ENCODE measurements at regions of chr2 and their contacts with region 1.

Region 1: DNA sequence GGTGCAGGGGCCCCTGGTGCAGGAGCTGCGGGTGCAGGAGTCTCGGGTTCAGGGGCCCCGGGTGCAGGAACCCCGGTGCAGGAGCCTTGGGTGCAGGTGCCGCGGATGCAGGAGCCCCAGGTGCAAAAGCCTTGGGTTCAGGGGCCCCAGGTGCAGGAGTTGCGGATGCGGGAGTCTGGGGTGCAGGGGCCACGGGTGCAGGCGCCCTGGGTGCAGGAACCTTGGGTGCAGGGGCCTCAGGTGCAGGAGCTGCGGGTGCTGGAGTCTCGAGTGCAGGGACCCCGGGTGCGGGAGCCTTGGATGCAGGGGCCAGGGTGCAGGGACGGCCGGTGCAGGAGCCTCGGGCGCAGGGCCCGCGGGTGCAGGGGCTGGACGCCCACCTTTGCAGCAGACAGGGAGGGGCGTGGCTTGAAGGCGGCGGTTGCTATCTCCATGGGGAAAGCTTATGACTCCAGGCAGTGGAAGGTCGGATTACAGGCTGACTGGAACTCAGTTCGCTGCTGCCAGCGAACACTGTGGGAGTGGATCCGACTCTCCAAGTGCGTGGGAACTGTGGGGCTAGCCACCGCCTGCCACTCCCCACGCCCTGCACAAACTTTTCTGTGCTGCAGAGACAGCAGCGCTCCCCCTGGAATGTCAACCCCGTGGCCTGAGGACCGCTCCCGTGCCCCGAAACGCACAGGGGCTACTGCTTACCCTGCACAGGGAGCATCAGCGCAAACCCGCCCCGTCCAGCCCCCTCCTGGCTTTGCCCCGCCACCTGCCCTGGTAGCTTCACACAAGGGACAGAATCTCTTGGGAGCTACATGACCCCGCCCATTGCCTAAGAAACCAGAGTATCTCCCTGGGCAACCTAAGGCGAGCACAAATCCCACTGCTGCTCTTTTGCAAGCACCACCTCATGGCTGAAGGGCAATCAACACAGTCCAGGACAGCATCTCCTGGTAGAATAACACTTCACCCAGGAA is 40.3 kb downstream of the COPS9 start:
- DNase-seq: no peak
- ATAC-seq: no peak
- H3K4me3 ChIP-seq: no peak overlapping the region
- H3K27ac ChIP-seq: no peak overlapping the region
- H3K4me1 ChIP-seq: no peaks in the 10 kb centered on the region
- H3K27me3 ChIP-seq: peaks cover 22% of the 10 kb centered on the region
- CTCF ChIP-seq: no peak
- POLR2A ChIP-seq: no peak
- RAD21 ChIP-seq: no peak

Region 2: DNA sequence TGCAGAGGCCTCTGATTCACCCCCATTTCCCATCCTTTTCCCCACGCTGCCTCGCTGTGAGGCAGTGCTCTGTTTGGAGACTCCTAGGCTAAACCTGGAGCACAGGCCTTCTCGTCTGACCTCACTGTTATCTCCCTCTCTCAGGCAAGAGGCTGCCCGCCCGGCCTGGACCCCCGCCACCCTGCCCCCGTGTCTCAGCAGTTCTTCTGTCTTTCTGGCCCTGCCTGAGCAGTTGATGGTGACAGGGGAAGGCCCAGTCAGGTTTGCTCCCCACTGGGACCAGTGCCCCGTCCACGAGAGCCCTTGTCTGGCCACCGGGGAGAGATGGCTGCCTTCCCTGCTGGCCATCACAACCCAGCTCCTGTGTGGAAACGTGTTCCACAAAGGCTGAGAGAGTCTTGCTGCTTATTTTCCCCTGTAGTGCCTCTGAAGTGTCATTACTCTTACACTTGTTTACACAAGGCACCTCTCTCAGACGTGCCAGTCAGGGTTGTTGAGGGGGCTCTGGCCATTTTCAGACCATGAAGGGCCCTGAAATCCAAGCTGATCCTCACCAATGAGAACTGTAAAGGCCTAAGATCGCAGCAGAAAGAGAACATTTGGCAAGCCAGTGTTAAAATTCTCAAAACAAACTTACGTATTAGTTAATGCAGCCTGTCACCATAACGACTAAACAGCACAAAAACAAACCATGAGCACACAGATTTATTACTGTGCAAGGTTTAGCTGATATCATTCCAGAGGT is 281.6 kb before region 1 on chr2:
- CTCF ChIA-PET with region 1: no interaction called
- POLR2A ChIA-PET with region 1: no interaction called
- dilution Hi-C with region 1: no loop called
- in situ Hi-C with region 1: no loop called
- intact Hi-C with region 1: no loop called
- DNase-seq: no peak
- ATAC-seq: no peak
- H3K4me3 ChIP-seq: no peak overlapping the region
- H3K27ac ChIP-seq: no peak overlapping the region
- H3K4me1 ChIP-seq: no peaks in the 10 kb centered on the region
- H3K27me3 ChIP-seq: no peaks in the 10 kb centered on the region
- CTCF ChIP-seq: no peak
- POLR2A ChIP-seq: no peak
- RAD21 ChIP-seq: no peak

Region 3: GRCh38 chr2:240069853-240070252 is 26.0 kb before region 1 on chr2:
- CTCF ChIA-PET with region 1: no interaction called
- POLR2A ChIA-PET with region 1: interaction called, 16 read pairs
- dilution Hi-C with region 1: no loop called
- in situ Hi-C with region 1: no loop called
- intact Hi-C with region 1: no loop called
- DNase-seq: no peak
- ATAC-seq: no peak
- H3K4me3 ChIP-seq: no peak overlapping the region
- H3K27ac ChIP-seq: no peak overlapping the region
- H3K4me1 ChIP-seq: no peaks in the 10 kb centered on the region
- H3K27me3 ChIP-seq: no peaks in the 10 kb centered on the region; the same call in 1 of the 2 replicates
- CTCF ChIP-seq: no peak
- POLR2A ChIP-seq: no peak
- RAD21 ChIP-seq: no peak

Region 4: DNA sequence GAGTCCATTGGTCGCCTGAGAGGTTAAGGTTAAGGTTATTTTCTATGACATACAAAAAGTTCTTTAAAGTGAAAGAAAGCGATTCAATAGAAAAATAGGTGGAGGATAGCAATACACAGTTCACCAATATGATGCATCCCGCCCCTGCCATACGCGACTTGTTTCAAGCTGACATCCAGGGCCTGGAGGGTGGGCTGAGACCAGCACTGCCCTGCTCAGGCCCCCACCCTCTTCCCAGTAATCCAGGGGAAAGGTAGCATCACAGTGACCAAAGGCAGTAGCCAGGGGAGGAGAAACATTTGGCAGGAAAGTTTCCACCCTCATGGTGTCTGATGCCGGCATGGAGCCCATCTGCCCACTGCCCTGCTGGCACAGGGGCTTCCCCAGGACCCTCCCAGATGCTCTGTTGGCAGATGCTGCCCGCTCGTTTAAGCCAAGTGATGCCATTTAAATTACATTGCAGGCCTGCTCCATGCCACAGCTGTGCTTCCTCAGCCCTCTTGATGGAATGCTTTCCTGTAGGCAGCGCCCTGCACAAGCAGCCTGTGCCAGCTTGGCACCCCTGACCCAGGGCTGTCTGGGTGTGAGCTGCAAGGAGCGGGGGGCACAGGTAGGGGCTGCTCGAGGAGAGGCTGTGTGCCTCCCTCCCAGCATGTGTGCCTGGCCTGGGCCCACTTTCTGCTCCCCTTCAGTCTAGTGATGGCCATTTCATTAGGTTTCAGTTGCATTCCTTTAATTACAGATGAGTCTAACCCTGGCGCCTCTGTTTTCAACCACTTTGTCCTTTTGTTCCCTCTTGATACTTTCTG is 1081.9 kb after region 1 on chr2:
- CTCF ChIA-PET with region 1: no interaction called
- POLR2A ChIA-PET with region 1: no interaction called
- dilution Hi-C with region 1: no loop called
- in situ Hi-C with region 1: no loop called
- intact Hi-C with region 1: no loop called
- DNase-seq: no peak
- ATAC-seq: no peak
- H3K4me3 ChIP-seq: no peak overlapping the region
- H3K27ac ChIP-seq: no peak overlapping the region
- H3K4me1 ChIP-seq: no peaks in the 10 kb centered on the region
- H3K27me3 ChIP-seq: no peaks in the 10 kb centered on the region
- CTCF ChIP-seq: no peak
- POLR2A ChIP-seq: no peak
- RAD21 ChIP-seq: no peak

Measured in IMR-90 (cell line).